ENCODE measurements at regions of chr11 and their contacts with region 1.

Region 1: GRCh38 chr11:78424334-78425270 is 7.0 kb upstream of the GAB2 start:
- DNase-seq: no peak
- H3K4me3 ChIP-seq: no peak overlapping the region
- H3K27ac ChIP-seq: no peak overlapping the region
- H3K4me1 ChIP-seq: peaks cover 0 to 26% (median 11%) of the 10 kb centered on the region in 4 donors
- H3K27me3 ChIP-seq: no peaks in the 10 kb centered on the region
- CTCF ChIP-seq: no peak

Region 2: DNA sequence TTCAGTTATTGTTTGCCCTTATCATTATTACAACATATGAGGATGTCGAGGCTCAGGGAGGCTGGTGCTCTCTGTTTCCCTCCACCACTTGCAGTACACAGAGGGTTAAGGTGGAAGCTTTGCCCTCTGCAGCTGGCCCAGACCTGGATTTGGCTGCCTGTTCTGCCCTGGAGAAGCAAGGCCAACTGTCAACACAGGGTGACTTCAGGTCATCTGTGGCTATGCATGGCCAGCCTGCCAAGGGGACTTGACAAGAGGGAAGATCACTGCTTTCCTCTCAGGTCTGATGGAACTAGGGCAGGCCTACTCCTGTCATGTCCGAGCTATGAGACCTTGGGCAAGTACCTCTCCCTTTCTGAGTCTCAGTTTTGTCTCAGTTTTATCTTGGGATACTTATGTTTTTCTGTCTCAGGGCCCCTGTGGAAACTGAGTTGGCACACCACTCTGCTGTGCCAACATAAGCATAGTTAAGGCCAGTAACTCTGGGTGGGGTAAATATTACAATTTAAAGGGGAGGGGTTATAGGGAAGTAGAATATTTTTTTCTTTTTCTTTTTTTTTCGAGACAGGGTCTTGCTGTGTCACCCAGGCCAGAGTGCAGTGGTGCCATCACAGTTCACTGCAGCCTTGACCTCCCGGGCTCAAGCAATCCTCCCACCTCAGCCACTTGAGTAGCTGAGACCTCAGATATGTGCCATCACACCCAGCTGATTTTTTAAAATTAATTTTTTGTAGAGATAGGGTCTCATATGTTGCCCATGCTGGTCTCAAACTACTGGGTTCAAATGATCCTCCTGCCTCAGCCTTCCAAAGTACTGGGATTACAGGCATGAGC is 363.3 kb before region 1 on chr11:
- intact Hi-C with region 1: no loop called
- DNase-seq: peak in 1 of 2 donors; percentile 71
- H3K4me3 ChIP-seq: no peak overlapping the region
- H3K27ac ChIP-seq: peak overlapping the region; percentile 33 to 46
- H3K4me1 ChIP-seq: peaks cover 0 to 39% (median 24%) of the 10 kb centered on the region in 4 donors
- H3K27me3 ChIP-seq: no peaks in the 10 kb centered on the region
- CTCF ChIP-seq: no peak

Region 3: GRCh38 chr11:78139422-78140391 is 284.9 kb before region 1 on chr11 and contains the start of gene ALG8:
- intact Hi-C with region 1: loop called (anchors 5 kb)
- DNase-seq: peak; percentile 95 to 97
- H3K4me3 ChIP-seq: peak within 1 kb of the TSS; percentile 64 to 65
- H3K27ac ChIP-seq: peak within 1 kb of the TSS; percentile 62 to 82
- H3K4me1 ChIP-seq: peaks cover 0 to 24% (median 10%) of the 10 kb centered on the region in 4 donors
- H3K27me3 ChIP-seq: no peaks in the 10 kb centered on the region
- CTCF ChIP-seq: no peak

Region 4: DNA sequence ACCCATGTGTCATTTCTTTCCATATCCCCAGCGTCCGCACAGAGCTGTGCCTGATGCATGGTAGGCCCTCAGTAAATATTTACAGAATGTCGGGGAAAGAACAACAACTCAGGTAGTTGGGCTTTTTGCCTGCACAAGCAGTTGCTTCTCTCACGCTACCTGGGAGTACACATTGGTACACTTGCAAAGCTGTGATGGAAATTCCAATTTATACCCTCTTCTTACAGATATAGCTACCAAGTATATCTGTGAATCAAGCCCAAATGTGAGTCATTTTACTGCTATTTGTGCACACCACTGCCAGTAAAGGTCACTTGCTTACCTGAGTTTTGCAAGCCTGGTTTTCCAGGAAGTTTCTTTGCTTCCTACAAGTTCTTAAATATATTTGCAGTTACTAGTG is 483.0 kb after region 1 on chr11:
- intact Hi-C with region 1: no loop called
- DNase-seq: no peak
- H3K4me3 ChIP-seq: no peak overlapping the region
- H3K27ac ChIP-seq: no peak overlapping the region
- H3K4me1 ChIP-seq: no peaks in the 10 kb centered on the region
- H3K27me3 ChIP-seq: no peaks in the 10 kb centered on the region
- CTCF ChIP-seq: no peak